ENCODE measurements at regions of chr5 and their contacts with region 1.

Region 1: GRCh38 chr5:149317281-149318048 is 27.8 kb upstream of the GRPEL2 start:
- DNase-seq: peak; percentile 45
- H3K4me3 Mint-ChIP-seq: no peak overlapping the region
- H3K27ac Mint-ChIP-seq: no peak overlapping the region
- H3K4me1 Mint-ChIP-seq: peaks cover 2% of the 10 kb centered on the region
- H3K27me3 Mint-ChIP-seq: no peaks in the 10 kb centered on the region

Region 2: DNA sequence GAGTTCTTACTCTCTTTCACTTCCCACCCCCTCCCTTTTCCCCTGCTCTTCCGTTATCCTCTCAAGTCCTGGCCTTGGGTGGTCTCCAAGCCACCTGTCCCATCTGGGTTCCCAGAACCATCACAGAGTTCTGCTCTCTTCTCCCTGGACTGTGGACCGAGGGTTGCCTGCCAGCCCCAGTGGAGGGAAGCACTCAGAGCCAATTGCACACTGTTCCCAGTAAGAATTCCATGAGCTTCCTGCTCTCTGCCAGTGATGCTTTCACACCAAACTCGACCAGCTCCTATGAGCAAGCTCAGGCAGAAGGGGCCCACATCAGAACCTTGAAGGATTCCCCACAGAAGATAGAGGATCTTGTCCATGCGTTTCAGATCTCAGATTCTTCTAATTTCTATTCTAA is 65.9 kb before region 1 on chr5:
- CTCF ChIA-PET with region 1: no interaction called
- POLR2A ChIA-PET with region 1: no interaction called
- DNase-seq: no peak
- H3K4me3 Mint-ChIP-seq: no peak overlapping the region
- H3K27ac Mint-ChIP-seq: no peak overlapping the region
- H3K4me1 Mint-ChIP-seq: peaks cover 3% of the 10 kb centered on the region
- H3K27me3 Mint-ChIP-seq: peaks cover 20% of the 10 kb centered on the region

Region 3: DNA sequence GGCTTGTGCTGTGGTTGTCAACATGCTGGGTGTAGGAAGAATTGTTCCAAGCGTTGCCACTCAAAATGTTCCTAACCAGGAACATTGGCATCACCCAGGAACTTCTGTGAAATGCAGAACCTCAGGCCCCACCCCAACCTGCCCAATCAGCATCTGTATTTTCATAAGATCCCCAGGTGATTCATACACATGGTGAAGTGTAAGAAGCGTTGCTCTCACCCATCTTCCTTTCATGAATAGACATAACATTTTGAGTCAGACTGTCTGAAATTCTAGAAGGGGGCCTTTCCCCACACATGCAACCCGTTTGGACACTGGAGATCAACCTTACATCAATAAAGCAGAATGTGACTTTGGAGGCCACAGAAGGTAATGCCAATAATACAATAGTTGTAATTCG is 55.1 kb before region 1 on chr5:
- CTCF ChIA-PET with region 1: no interaction called
- POLR2A ChIA-PET with region 1: no interaction called
- DNase-seq: no peak
- H3K4me3 Mint-ChIP-seq: no peak overlapping the region
- H3K27ac Mint-ChIP-seq: no peak overlapping the region
- H3K4me1 Mint-ChIP-seq: peaks cover 2% of the 10 kb centered on the region
- H3K27me3 Mint-ChIP-seq: peaks cover 19% of the 10 kb centered on the region

Region 4: GRCh38 chr5:149333711-149334443 is 16.4 kb after region 1 on chr5:
- CTCF ChIA-PET with region 1: interaction called, 10 read pairs
- POLR2A ChIA-PET with region 1: no interaction called
- DNase-seq: no peak
- H3K4me3 Mint-ChIP-seq: no peak overlapping the region
- H3K27ac Mint-ChIP-seq: no peak overlapping the region
- H3K4me1 Mint-ChIP-seq: no peaks in the 10 kb centered on the region
- H3K27me3 Mint-ChIP-seq: peaks cover 8% of the 10 kb centered on the region

Region 5: DNA sequence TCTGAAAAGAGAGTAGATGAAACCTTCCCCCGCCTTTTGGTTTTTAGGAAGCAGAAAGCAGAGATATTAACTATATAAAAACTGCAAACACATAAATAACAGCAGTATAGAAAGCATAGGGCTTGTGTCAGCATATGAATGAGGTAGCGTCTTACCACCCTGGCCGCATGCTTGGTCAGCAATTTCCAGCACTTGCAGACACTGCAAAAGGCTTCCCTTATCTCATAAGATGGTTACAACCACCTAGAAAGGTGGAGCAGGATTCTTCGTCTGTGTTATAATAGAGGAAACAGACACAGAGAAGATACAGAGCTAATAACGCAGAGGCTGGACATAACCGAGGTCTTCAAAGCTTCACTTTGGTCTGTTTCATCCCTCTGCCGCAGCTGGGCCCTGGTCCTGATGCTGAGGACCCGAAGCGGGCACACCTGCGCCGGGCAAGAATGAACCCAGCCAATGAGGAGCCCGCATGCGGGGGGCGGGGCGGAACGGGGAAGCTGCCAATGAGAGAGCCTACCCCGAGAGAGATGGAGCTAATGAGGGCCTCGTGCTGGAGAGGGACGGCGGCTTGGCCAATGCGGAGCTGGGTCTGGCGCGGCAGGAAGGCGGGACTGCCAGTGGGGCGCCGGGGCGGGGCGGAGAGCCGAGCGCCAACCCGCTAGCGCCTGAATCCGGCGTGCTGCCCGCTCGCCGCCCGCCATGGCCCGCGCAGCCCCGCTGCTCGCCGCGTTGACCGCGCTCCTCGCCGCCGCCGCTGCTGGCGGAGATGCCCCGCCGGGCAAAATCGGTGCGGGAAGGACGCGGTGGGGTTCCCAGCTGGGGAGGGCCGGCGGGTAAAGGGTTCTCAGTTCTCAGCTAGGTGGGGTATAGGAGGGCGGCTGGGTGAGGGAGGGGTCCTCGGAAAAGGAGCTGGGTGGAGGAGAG is 40.2 kb after region 1 on chr5 and contains the start of gene PCYOX1L:
- CTCF ChIA-PET with region 1: interaction called, 278 read pairs
- POLR2A ChIA-PET with region 1: interaction called, 3 read pairs
- DNase-seq: peak; percentile 94
- H3K4me3 Mint-ChIP-seq: peak within 1 kb of the TSS; percentile 92
- H3K27ac Mint-ChIP-seq: peak within 1 kb of the TSS; percentile 85
- H3K4me1 Mint-ChIP-seq: peaks cover 71% of the 10 kb centered on the region
- H3K27me3 Mint-ChIP-seq: no peaks in the 10 kb centered on the region
- total RNA-seq, gene PCYOX1L: 41.2 to 42.1 TPM

Measured in activated CD4-positive, alpha-beta memory T cell treated with anti-CD3 and anti-CD28 coated beads, Interleukin-2, amount 10 ng/mL, durations not matched to agents 7 days and 5 days (primary cell).